Activated T-helper 2 cell treated with anti-CD3 and anti-CD28 coated beads, Interferon-gamma antibody, Interleukin-2, Interleukin-4, amounts not matched to agents 10 μg/mL and 5 μg/mL and 100 μg/mL, durations not matched to agents 14 hours and 24 hours and 36 hours (primary cell): ENCODE measurements at regions of chr5 and their contacts with region 1.

Region 1: DNA sequence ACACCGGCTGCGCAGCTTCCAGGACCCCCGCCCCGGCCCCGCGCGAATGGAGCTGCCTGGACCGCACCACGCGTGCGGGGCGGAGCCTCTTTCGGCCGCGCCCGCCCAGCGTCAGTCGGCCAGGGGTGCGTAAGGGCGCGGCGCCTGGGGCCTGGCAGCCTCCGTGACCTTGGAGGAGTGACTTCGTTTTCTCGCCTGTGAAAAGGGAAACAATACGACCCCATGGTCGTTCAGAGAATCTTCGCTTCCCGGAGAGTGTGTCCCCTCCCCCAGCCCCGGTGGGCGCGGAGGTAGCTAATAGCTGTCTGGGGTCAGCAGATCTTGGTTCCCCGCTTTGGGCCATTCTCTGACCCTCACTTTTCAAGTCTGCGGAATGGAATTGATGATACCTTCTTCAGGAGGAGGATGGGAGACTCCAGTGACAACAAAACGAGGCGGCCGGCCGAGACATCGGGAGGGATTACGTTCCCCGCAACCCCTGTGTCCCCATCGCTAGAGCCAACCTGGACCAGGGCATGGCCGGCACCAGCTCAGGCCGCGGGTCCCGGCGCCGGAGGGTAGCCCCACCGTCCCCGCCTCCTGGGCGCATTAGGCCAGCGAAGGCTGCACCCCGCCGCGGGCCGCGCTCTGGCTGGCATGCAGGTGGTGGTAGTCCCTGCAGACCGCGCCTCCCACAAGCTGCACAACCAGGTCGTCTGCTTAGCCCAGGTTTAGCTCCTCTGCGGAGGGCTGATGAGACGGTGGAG is 5.5 kb upstream of the CDHR2 start:
- DNase-seq: peak; percentile 75
- H3K4me3 Mint-ChIP-seq: peak overlapping the region; percentile 91
- H3K27ac Mint-ChIP-seq: peak overlapping the region; percentile 95
- H3K4me1 Mint-ChIP-seq: peaks cover 40% of the 10 kb centered on the region
- H3K27me3 Mint-ChIP-seq: no peaks in the 10 kb centered on the region

Region 2: DNA sequence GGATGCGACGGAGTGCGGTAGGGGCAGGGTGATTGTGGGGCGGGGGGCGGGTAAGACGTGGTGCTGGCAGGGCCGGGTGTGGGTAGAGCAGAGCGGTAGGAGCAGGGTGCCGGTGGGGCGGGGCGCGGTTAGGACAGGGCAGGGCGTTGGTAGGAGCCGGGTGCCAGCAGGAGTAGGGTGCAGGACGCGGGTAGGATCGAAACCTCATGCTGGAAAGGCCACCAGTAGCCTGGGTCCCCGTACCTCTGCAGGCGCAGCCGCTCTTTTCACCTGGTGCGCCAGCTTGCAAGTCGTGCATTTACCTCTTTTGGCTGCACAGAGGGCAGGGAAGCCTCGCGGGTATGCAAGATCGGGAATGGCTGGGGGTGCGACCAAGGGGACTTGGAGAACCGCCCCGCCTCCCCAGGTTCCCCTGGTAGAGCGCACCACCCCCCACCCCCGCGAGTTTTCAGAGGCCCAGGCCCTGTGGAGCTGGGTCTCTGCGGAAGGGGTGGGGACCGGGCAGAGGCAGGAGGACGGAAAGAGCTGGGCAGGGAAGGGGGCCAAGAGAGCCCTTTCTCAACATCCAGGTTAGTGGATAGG is 410.2 kb before region 1 on chr5:
- intact Hi-C with region 1: no loop called
- DNase-seq: no peak
- H3K4me3 Mint-ChIP-seq: no peak overlapping the region
- H3K27ac Mint-ChIP-seq: no peak overlapping the region
- H3K4me1 Mint-ChIP-seq: peaks cover 5% of the 10 kb centered on the region
- H3K27me3 Mint-ChIP-seq: peaks cover 47% of the 10 kb centered on the region

Region 3: DNA sequence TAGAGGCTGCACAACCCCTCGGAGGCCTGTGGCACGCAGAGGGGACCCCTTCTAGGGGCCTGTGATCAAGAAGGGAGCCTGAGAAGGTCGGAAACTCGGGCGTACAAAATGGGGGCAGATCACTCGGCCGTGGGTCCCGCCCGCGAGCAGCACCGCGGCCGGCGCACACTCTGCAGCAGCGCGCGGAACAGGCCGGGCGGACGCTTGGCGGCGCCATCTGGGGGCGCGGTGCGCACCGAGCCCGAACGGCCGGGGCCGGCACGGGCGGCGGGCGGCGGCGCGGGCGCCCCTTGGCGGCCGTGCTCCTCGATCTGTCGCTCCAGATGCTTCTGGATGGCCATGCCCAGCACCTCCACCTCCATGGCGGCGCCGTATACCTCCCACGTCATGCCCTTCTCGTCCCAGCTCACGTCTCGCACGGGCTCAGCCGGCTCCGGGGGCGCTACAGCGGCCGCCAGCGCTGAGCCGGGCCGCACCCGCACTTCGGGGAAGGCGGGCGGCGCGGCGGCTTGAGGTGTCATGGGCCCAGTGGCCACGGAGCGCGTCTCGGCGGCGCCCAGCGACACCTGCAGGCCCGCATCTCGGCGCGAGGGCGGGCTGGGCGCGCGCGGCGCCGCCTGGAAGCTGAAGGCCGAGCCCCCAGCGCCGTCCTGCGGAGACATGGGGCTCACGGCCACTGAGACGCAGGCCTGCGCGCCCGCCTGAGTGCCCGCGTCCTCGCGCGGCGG is 53.3 kb after region 1 on chr5:
- intact Hi-C with region 1: loop called (anchors 5 kb)
- DNase-seq: peak; percentile 52
- H3K4me3 Mint-ChIP-seq: peak overlapping the region; percentile 73
- H3K27ac Mint-ChIP-seq: no peak overlapping the region
- H3K4me1 Mint-ChIP-seq: peaks cover 2% of the 10 kb centered on the region
- H3K27me3 Mint-ChIP-seq: peaks cover 4% of the 10 kb centered on the region

Region 4: DNA sequence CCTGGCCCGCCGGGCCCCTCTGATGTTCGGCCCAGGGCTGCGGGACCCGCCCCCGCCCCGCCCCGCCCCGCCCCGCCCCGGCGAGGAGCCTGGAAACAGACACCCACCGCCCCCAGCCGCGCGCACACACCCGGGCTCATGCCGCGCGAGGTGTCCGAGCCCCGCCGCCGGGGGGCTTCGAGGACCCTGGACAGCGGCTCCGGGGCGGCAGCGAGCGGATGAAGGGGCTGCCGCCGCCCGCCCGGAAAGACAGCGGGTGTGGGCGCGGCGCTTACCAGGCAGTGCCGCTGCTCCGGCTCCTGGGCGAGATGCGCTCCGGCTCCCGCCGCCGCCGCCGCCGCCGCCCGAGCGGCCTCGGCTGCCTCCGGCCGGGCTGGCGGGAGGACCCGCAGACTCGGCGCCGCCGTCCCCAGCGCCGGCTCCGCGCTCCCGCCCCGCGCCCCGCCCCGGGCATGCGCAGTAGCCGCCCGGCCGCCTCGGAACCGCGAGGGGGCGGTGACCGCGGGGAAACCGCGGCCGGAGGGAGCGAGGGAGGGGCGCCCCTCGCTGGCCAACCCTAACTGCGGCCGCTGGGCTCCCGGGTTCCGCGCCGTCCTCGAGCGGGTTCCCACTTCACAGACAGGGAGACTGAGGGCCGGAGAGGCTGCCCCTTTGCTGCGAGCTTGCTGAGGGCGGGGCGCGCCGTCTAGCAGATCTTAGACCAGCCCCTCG is 66.3 kb after region 1 on chr5 and contains the start of gene GPRIN1:
- intact Hi-C with region 1: loop called (anchors 5 kb)
- DNase-seq: peak; percentile 63
- H3K4me3 Mint-ChIP-seq: peak within 1 kb of the TSS; percentile 92
- H3K27ac Mint-ChIP-seq: peak within 1 kb of the TSS; percentile 76
- H3K4me1 Mint-ChIP-seq: peaks cover 13% of the 10 kb centered on the region
- H3K27me3 Mint-ChIP-seq: peaks cover 33% of the 10 kb centered on the region
- total RNA-seq, gene GPRIN1: 3.0 and 3.6 TPM in 2 replicates